A549 (cell line): ENCODE measurements at regions of chr20 and their contacts with region 1.

Region 1: GRCh38 chr20:54173653-54174456 is at the start of gene CYP24A1:
- DNase-seq: peak; percentile 97 to 98
- ATAC-seq: peak; percentile 87
- H3K4me3 ChIP-seq: peak within 1 kb of the TSS; percentile 83
- H3K27ac ChIP-seq: peak within 1 kb of the TSS; percentile 93 to 100
- H3K4me1 ChIP-seq: peaks cover 43% of the 10 kb centered on the region
- CTCF ChIP-seq: no peak
- EP300 ChIP-seq: peak; percentile 92; a peak in 4 of 5 replicates
- POLR2A ChIP-seq: peak; percentile 100
- RAD21 ChIP-seq: no peak
- polyA plus RNA-seq, gene CYP24A1: 1,617 and 1,630 TPM in 2 replicates

Region 2: DNA sequence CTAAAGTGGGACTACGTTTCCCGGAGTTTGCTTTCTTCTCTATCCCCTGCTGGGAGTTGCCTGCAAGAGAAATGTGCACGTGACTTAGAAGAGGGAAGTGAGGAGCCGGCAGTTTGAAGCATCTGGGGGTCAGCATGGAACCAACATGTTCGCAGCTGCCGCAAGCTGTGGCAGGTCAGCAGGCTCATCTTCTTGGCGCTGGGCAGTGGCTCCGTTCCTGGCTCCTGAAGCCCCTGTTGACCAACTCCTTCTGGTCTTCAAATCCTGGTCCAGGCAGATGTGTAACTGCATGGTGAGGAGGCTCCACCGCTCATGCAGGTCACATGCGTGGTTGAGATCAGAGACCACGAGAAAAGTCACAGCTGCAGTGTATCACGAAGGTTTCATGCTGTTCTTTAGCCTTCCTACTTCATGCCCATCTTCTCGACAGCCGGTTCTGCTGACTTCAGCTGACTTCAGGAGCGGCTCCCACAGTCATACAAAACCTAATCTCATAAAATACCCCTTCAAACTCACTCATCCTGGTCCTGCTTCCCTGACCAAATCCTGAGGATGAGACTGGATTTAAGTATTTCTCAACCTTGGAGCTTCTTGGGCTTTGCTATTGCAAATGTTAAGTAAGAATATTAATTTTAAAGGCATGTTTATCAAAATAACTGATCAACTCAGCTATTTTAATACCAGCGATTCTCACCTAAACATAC is 58.6 kb before region 1 on chr20:
- CTCF ChIA-PET with region 1: interaction called, 3 read pairs
- POLR2A ChIA-PET with region 1: interaction called, 24 read pairs
- DNase-seq: peak; percentile 77 to 92
- ATAC-seq: peak; percentile 84 to 88
- H3K4me3 ChIP-seq: no peak overlapping the region
- H3K27ac ChIP-seq: peak overlapping the region; percentile 94 to 98
- H3K4me1 ChIP-seq: peaks cover 76% of the 10 kb centered on the region
- CTCF ChIP-seq: no peak
- EP300 ChIP-seq: no peak
- POLR2A ChIP-seq: no peak
- RAD21 ChIP-seq: no peak

Region 3: GRCh38 chr20:54123587-54124180 is 50.2 kb before region 1 on chr20:
- CTCF ChIA-PET with region 1: interaction called, 4 read pairs
- POLR2A ChIA-PET with region 1: interaction called, 22 read pairs
- DNase-seq: peak; percentile 93 to 100
- ATAC-seq: peak; percentile 95 to 98
- H3K4me3 ChIP-seq: no peak overlapping the region
- H3K27ac ChIP-seq: peak overlapping the region; percentile 96 to 98
- H3K4me1 ChIP-seq: peaks cover 86% of the 10 kb centered on the region
- CTCF ChIP-seq: no peak
- EP300 ChIP-seq: peak; percentile 100
- POLR2A ChIP-seq: no peak
- RAD21 ChIP-seq: peak; percentile 44 to 60

Region 4: DNA sequence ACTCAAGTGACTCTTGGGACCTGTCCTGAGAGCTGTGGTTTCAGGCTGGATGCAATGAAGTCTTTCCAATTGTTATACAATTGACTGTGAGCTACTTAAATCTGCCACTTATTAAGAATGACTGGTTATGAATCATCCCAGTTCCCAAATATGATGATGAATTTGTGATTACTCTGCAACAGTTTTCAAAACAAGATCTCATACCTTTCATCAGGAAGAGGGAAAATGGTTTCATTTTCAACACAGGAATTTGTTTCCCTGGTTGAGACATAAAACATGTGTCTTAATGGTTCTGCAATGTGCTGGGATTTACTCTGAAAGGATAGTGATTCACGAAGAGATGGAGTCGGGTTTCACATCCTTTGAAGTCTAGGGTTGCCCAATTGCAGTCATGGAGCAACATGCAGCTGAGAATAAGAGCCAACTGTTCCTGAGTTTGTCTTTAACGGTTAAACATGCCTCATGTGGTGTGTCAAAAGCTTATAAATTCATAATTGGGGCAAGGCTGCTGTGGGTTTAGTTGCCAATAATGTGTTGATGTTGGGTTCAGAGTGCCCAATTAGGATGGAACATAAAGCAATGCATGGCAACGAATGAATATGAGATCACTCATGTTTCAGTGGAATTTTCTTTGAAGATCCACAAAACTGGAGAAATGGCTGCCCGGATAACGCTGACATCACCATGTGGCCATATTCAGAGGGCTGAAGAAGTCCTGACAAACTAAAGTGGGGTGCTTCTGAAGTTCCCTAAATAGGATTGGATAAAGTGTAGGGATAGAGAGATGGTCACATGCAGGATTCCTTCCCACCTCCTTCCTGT is 41.0 kb before region 1 on chr20:
- CTCF ChIA-PET with region 1: interaction called, 5 read pairs
- POLR2A ChIA-PET with region 1: interaction called, 19 read pairs
- DNase-seq: peak; percentile 70 to 96
- ATAC-seq: peak; percentile 83 to 93
- H3K4me3 ChIP-seq: no peak overlapping the region
- H3K27ac ChIP-seq: peak overlapping the region; percentile 87 to 96
- H3K4me1 ChIP-seq: peaks cover 49% of the 10 kb centered on the region
- CTCF ChIP-seq: no peak
- EP300 ChIP-seq: peak; percentile 98
- POLR2A ChIP-seq: no peak
- RAD21 ChIP-seq: peak in 1 of 2 experiments; percentile 47; a peak in 4 of 5 replicates

Region 5: DNA sequence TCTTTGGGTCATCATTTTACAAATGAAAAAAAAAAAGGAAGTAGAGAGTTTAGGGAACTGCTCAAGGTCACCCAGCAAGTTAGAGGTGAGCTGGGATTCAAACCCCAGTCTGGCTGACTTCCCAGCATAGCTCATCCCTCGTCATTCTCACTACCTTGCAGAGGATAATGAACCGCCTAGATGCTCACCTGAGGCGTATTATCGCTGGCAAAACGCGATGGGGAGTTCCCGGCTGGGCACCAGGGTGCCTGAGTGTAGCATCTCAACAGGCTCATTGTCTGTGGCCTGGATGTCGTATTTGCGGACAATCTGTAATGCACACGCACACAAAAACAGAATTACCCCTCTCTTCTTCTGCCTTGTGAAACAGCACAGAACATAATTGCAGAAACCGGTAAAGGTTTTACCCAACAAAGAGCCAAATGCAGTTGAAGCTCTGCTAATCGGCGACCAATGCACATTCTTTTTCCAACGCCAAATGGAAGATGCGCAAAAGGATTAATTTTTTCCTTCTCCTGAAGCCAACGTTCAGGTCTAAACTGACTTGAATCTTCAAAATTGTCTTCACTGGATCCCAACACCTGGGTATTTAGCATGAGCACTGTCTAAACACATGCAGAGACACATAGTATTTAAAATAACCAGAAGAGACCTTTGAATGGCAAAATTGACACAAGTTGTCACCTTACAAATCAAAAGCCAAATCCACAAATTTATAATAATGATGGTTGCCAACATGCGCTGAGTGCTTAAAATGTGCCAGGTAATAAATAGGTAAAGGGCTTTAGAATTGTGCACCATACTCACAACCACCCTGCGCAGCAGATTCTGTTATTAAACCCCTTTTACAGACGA is 16.6 kb before region 1 on chr20:
- CTCF ChIA-PET with region 1: interaction called, 10 read pairs
- POLR2A ChIA-PET with region 1: interaction called, 69 read pairs
- DNase-seq: peak in 1 of 2 experiments; percentile 61
- ATAC-seq: no peak
- H3K4me3 ChIP-seq: peak overlapping the region; percentile 5; the same call in 1 of the 3 replicates
- H3K27ac ChIP-seq: peak overlapping the region; percentile 93 to 100
- H3K4me1 ChIP-seq: peaks cover 100% of the 10 kb centered on the region
- CTCF ChIP-seq: no peak
- EP300 ChIP-seq: no peak
- POLR2A ChIP-seq: no peak
- RAD21 ChIP-seq: no peak

Region 6: GRCh38 chr20:54162360-54163012 is 11.4 kb before region 1 on chr20:
- CTCF ChIA-PET with region 1: interaction called, 10 read pairs
- POLR2A ChIA-PET with region 1: interaction called, 69 read pairs
- DNase-seq: peak in 1 of 2 experiments; percentile 47
- ATAC-seq: peak in 1 of 2 experiments; percentile 0; a peak in 3 of 6 replicates
- H3K4me3 ChIP-seq: peak overlapping the region; percentile 20
- H3K27ac ChIP-seq: peak overlapping the region; percentile 93 to 100
- H3K4me1 ChIP-seq: peaks cover 100% of the 10 kb centered on the region
- CTCF ChIP-seq: no peak
- EP300 ChIP-seq: no peak
- POLR2A ChIP-seq: no peak
- RAD21 ChIP-seq: no peak

Region 7: GRCh38 chr20:54305421-54305820 is 131.6 kb after region 1 on chr20:
- CTCF ChIA-PET with region 1: no interaction called
- POLR2A ChIA-PET with region 1: no interaction called
- DNase-seq: no peak
- ATAC-seq: no peak
- H3K4me3 ChIP-seq: no peak overlapping the region
- H3K27ac ChIP-seq: no peak overlapping the region
- H3K4me1 ChIP-seq: no peaks in the 10 kb centered on the region
- CTCF ChIP-seq: no peak
- EP300 ChIP-seq: no peak
- POLR2A ChIP-seq: no peak
- RAD21 ChIP-seq: no peak